ENCODE measurements at regions of chr13 and their contacts with region 1.

Region 1: GRCh38 chr13:82847595-82847994 is 1034.7 kb downstream of the SLITRK1 start:
- DNase-seq: no peak
- H3K4me3 ChIP-seq: no peak overlapping the region
- H3K27ac ChIP-seq: no peak overlapping the region
- H3K4me1 ChIP-seq: no peaks in the 10 kb centered on the region
- H3K27me3 ChIP-seq: no peaks in the 10 kb centered on the region
- CTCF ChIP-seq: no peak

Region 2: DNA sequence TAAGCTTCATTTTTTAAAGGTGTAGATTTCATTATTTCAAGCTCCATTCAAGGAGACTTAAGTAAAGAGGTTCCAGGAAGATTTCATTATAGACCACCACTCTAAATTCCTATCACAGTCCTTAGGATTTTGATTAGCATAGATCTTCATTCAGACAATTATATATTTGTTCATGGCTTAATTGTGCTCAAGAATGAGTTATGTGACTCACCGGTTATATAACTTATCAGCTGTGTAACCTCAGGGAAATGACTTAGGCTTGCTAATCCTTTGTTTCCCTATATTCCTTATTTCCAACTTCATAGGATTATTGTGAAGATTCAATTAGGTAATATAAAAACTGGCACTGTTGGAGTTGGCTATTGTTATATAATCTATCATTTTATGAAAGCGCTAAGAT is 1873.9 kb before region 1 on chr13:
- CTCF ChIA-PET with region 1: no interaction called
- POLR2A ChIA-PET with region 1: no interaction called
- intact Hi-C with region 1: loop called (anchors 5 kb)
- DNase-seq: no peak
- H3K4me3 ChIP-seq: no peak overlapping the region
- H3K27ac ChIP-seq: no peak overlapping the region
- H3K4me1 ChIP-seq: no peaks in the 10 kb centered on the region
- H3K27me3 ChIP-seq: no peaks in the 10 kb centered on the region
- CTCF ChIP-seq: no peak

Region 3: GRCh38 chr13:82522872-82523271 is 324.7 kb before region 1 on chr13:
- CTCF ChIA-PET with region 1: no interaction called
- POLR2A ChIA-PET with region 1: no interaction called
- intact Hi-C with region 1: no loop called
- DNase-seq: no peak
- H3K4me3 ChIP-seq: no peak overlapping the region
- H3K27ac ChIP-seq: no peak overlapping the region
- H3K4me1 ChIP-seq: no peaks in the 10 kb centered on the region
- H3K27me3 ChIP-seq: no peaks in the 10 kb centered on the region
- CTCF ChIP-seq: no peak

Region 4: DNA sequence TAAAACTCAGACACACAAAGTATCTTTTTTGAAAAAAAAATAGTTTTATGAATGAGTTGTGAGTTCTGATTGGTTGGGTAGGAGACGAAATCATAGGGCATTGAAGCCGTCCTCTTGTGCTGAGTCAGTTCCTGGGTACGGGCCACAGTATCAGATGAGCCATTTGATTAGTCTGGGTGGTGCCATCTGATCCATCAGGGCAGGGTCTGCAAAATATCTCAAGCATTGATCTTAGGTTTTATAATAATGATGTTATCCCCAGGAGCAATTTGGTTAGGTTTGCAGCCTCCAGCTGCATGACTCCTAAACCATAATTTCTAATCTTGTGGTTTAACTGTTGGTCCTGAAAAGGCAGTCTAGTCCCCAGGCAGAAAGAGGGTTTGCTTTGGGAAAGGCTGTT is 275.9 kb before region 1 on chr13:
- CTCF ChIA-PET with region 1: no interaction called
- POLR2A ChIA-PET with region 1: no interaction called
- intact Hi-C with region 1: no loop called
- DNase-seq: no peak
- H3K4me3 ChIP-seq: no peak overlapping the region
- H3K27ac ChIP-seq: no peak overlapping the region
- H3K4me1 ChIP-seq: no peaks in the 10 kb centered on the region
- H3K27me3 ChIP-seq: no peaks in the 10 kb centered on the region
- CTCF ChIP-seq: no peak

Region 5: GRCh38 chr13:83085186-83085900 is 237.7 kb after region 1 on chr13:
- CTCF ChIA-PET with region 1: no interaction called
- POLR2A ChIA-PET with region 1: no interaction called
- intact Hi-C with region 1: loop called (anchors 10 kb)
- DNase-seq: no peak
- H3K4me3 ChIP-seq: no peak overlapping the region
- H3K27ac ChIP-seq: no peak overlapping the region
- H3K4me1 ChIP-seq: no peaks in the 10 kb centered on the region
- H3K27me3 ChIP-seq: no peaks in the 10 kb centered on the region
- CTCF ChIP-seq: no peak

Region 6: DNA sequence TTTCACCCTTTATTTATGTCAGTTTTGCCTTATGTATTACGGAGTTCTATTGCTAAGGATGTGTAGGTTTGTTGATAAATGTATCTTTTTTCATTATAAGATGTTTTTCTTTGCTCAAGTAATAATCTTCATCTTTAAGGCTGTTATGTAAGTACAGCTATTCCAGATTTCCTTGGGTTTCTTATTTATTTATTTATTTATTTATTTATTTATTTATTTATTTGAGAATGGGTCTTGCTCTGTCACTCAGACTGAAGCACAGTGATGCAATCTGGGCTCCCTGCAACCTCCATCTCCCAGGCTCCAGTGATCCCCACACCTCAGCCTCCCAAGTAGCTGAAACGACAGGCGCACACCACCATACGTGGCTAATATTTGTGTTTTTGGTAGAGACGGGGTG is 417.7 kb after region 1 on chr13:
- CTCF ChIA-PET with region 1: no interaction called
- POLR2A ChIA-PET with region 1: interaction called, 28 read pairs
- intact Hi-C with region 1: no loop called
- DNase-seq: no peak
- H3K4me3 ChIP-seq: no peak overlapping the region
- H3K27ac ChIP-seq: no peak overlapping the region
- H3K4me1 ChIP-seq: no peaks in the 10 kb centered on the region
- H3K27me3 ChIP-seq: no peaks in the 10 kb centered on the region
- CTCF ChIP-seq: no peak

Measured in PC-9 (cell line).